Activated CD4-positive, alpha-beta memory T cell treated with anti-CD3 and anti-CD28 coated beads for 36 hours (primary cell): ENCODE measurements at regions of chr12 and their contacts with region 1.

Region 1: DNA sequence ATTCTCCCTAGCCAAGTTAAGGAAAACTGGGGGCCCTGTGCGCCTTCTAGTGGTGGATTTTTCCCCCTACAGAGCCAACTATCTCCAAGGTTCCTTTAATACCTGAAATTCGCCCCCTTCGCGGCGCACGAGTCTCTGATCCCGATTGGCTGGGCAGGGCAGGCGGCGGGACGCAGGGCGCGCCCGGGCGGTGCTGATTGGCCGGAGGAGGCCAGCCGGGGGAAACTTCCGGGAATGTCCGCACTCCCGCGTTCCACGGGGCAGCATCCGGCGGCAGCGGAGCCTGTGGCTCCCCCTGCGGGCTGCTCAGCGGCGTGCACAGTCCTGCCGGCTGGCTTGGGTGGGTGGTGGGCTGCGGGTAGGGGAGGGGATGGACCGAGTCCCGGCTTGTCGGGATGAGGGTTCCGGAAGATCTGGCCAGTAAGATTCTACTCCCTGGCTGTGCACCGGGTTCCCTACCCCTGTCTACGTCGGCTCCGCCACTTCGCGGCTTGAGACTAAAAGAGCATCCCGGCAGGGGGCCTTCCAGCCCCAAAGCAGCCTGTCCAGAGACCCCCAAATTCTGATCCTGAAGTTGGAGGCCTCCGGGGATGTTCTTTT is at the start of gene NABP2:
- DNase-seq: peak; percentile 97
- H3K4me3 Mint-ChIP-seq: peak within 1 kb of the TSS; percentile 96
- H3K27ac Mint-ChIP-seq: peak within 1 kb of the TSS; percentile 80
- H3K4me1 Mint-ChIP-seq: peaks cover 33% of the 10 kb centered on the region
- H3K27me3 Mint-ChIP-seq: no peaks in the 10 kb centered on the region
- total RNA-seq, gene NABP2: 62.0 to 62.2 TPM

Region 2: GRCh38 chr12:55973598-55974307 is 250.4 kb before region 1 on chr12 and contains the start of gene RAB5B:
- CTCF ChIA-PET with region 1: no interaction called
- POLR2A ChIA-PET with region 1: interaction called, 4 read pairs
- intact Hi-C with region 1: loop called (anchors 10 kb)
- DNase-seq: peak; percentile 99
- H3K4me3 Mint-ChIP-seq: no peak within 1 kb of the TSS
- H3K27ac Mint-ChIP-seq: no peak within 1 kb of the TSS
- H3K4me1 Mint-ChIP-seq: peaks cover 19% of the 10 kb centered on the region
- H3K27me3 Mint-ChIP-seq: no peaks in the 10 kb centered on the region
- total RNA-seq, gene RAB5B: 44.8 to 46.4 TPM

Region 3: GRCh38 chr12:56152318-56153033 is 71.7 kb before region 1 on chr12 and contains the start of gene MYL6B:
- CTCF ChIA-PET with region 1: interaction called, 3 read pairs
- POLR2A ChIA-PET with region 1: interaction called, 5 read pairs
- intact Hi-C with region 1: loop called (anchors 2 kb)
- DNase-seq: peak; percentile 97
- H3K4me3 Mint-ChIP-seq: peak within 1 kb of the TSS; percentile 78
- H3K27ac Mint-ChIP-seq: peak within 1 kb of the TSS; percentile 96
- H3K4me1 Mint-ChIP-seq: peaks cover 34% of the 10 kb centered on the region
- H3K27me3 Mint-ChIP-seq: no peaks in the 10 kb centered on the region
- total RNA-seq, gene MYL6B: 63.8 to 70.8 TPM

Region 4: GRCh38 chr12:56206457-56207166 is 17.6 kb before region 1 on chr12:
- CTCF ChIA-PET with region 1: interaction called, 33 read pairs
- POLR2A ChIA-PET with region 1: interaction called, 7 read pairs
- intact Hi-C with region 1: loop called (anchors 2 kb)
- DNase-seq: peak; percentile 59
- H3K4me3 Mint-ChIP-seq: no peak overlapping the region
- H3K27ac Mint-ChIP-seq: no peak overlapping the region
- H3K4me1 Mint-ChIP-seq: no peaks in the 10 kb centered on the region
- H3K27me3 Mint-ChIP-seq: no peaks in the 10 kb centered on the region

Region 5: GRCh38 chr12:56258057-56258819 is 34.0 kb after region 1 on chr12 and contains the start of gene ANKRD52:
- CTCF ChIA-PET with region 1: interaction called, 18 read pairs
- POLR2A ChIA-PET with region 1: interaction called, 10 read pairs
- intact Hi-C with region 1: loop called (anchors 5 kb)
- DNase-seq: peak; percentile 82
- H3K4me3 Mint-ChIP-seq: peak within 1 kb of the TSS; percentile 87
- H3K27ac Mint-ChIP-seq: peak within 1 kb of the TSS; percentile 81
- H3K4me1 Mint-ChIP-seq: peaks cover 19% of the 10 kb centered on the region
- H3K27me3 Mint-ChIP-seq: no peaks in the 10 kb centered on the region
- total RNA-seq, gene ANKRD52: 34.1 to 37.0 TPM